ENCODE measurements at regions of chr1 and their contacts with region 1.

Region 1: GRCh38 chr1:12407050-12407961 is 177.5 kb downstream of the VPS13D start:
- DNase-seq: peak in 5 of 9 donors; percentile 20 to 45 (median 43)
- ATAC-seq: peak; percentile 49
- H3K4me3 ChIP-seq: no peak overlapping the region
- H3K4me3 Mint-ChIP-seq: no peak overlapping the region
- H3K27ac ChIP-seq: no peak overlapping the region
- H3K27ac Mint-ChIP-seq: peak overlapping the region in 2 of 9 donors; percentile 59 to 61
- H3K4me1 ChIP-seq: peaks cover 0 to 11% of the 10 kb centered on the region in 2 donors
- H3K4me1 Mint-ChIP-seq: peaks cover 10 to 57% (median 47%) of the 10 kb centered on the region in 7 donors
- H3K27me3 ChIP-seq: no peaks in the 10 kb centered on the region
- H3K27me3 Mint-ChIP-seq: no peaks in the 10 kb centered on the region

Region 2: GRCh38 chr1:12604114-12604874 is 197.0 kb after region 1 on chr1:
- CTCF ChIA-PET with region 1: interaction called, 8 read pairs
- POLR2A ChIA-PET with region 1: no interaction called
- intact Hi-C with region 1: loop called in 1 of 2 experiments (anchors 5 kb)
- DNase-seq: peak in 8 of 9 donors; percentile 36 to 78 (median 68)
- ATAC-seq: peak; percentile 90
- H3K4me3 ChIP-seq: no peak overlapping the region
- H3K4me3 Mint-ChIP-seq: peak overlapping the region; percentile 25 to 75 (median 68)
- H3K27ac ChIP-seq: peak overlapping the region; percentile 41
- H3K27ac Mint-ChIP-seq: peak overlapping the region; percentile 78 to 97 (median 88)
- H3K4me1 ChIP-seq: peaks cover 27 to 50% of the 10 kb centered on the region in 2 donors
- H3K4me1 Mint-ChIP-seq: peaks cover 23 to 94% (median 82%) of the 10 kb centered on the region in 7 donors
- H3K27me3 ChIP-seq: no peaks in the 10 kb centered on the region
- H3K27me3 Mint-ChIP-seq: peaks cover 0 to 2% (median 0%) of the 10 kb centered on the region in 5 donors

Region 3: DNA sequence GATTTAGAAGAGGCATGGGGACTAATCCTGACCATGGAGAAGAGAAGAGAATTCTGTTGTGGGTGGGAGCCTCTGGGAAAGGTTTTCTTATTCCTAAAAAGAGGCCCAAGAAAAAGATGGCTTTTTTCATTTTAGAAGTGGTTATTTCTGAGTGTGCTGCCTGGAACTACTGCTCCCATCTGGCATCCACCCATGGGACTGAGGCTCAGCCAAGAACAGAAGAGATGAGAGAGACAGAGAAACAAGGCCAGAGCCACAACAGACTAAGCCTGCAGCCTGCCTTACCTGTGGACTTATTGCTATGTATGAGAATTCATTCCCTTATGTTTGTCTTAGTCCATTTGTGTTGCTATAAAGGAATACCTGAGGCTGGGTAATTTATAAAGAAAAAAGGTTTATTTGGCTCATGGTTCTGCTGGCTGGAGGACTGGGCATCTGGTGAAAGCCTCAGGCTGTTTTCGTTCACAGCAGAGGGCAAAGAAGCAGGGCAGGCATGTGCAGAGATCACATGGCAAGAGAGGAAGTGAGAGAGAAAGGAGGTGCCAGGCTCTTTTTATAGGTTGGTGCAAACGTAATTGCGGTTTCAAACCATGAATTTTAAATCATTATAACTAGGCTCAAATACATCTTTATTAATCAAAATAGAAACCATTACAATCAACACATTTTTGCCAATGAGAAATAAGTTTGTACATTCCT is 1235.1 kb after region 1 on chr1:
- CTCF ChIA-PET with region 1: no interaction called
- POLR2A ChIA-PET with region 1: no interaction called
- intact Hi-C with region 1: no loop called
- DNase-seq: no peak
- ATAC-seq: no peak
- H3K4me3 ChIP-seq: no peak overlapping the region
- H3K4me3 Mint-ChIP-seq: no peak overlapping the region
- H3K27ac ChIP-seq: no peak overlapping the region
- H3K27ac Mint-ChIP-seq: no peak overlapping the region
- H3K4me1 ChIP-seq: no peaks in the 10 kb centered on the region
- H3K4me1 Mint-ChIP-seq: peaks cover 0 to 4% (median 0%) of the 10 kb centered on the region in 7 donors
- H3K27me3 ChIP-seq: no peaks in the 10 kb centered on the region
- H3K27me3 Mint-ChIP-seq: peaks cover 0 to 17% (median 14%) of the 10 kb centered on the region in 5 donors